Heart left ventricle (tissue), 16 donors: ENCODE measurements at regions of chr17 and their contacts with region 1.

Region 1: GRCh38 chr17:56478836-56479447 is 114.6 kb upstream of the NOG start:
- DNase-seq: no peak
- ATAC-seq: no peak
- H3K4me3 ChIP-seq: no peak overlapping the region
- H3K27ac ChIP-seq: no peak overlapping the region
- H3K4me1 ChIP-seq: no peaks in the 10 kb centered on the region
- H3K27me3 ChIP-seq: peaks cover 0 to 9% (median 0%) of the 10 kb centered on the region in 9 donors
- CTCF ChIP-seq: peak in 9 of 12 donors; percentile 25 to 53 (median 39)
- POLR2A ChIP-seq: no peak

Region 2: DNA sequence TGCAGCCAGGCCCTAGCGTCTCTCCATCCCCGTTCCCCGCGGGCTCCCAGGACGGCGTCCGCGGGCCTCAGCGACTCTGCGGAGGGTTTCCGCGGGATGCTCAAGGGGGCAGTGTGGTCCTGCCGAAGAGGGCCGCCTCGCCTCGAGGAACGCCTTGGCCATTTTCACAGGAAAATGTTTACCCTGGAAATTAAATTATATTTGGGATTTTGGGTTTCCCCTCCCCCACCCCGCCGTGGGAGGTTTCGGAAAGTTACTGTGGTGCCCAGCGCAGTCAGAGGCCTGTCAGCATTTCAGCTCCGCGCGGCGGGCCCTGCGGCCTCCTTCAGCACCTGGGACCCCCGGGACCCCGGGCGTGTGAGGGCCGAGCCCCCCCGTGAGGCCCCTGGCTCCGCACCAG is 633.6 kb before region 1 on chr17:
- intact Hi-C with region 1: loop called in 7 of 10 experiments (anchors 5 to 10 kb)
- DNase-seq: peak; percentile 27 to 69 (median 49)
- ATAC-seq: peak; percentile 71 to 93 (median 80)
- H3K4me3 ChIP-seq: peak overlapping the region in 9 of 12 donors; percentile 15 to 36 (median 32)
- H3K27ac ChIP-seq: no peak overlapping the region
- H3K4me1 ChIP-seq: peaks cover 0 to 6% (median 0%) of the 10 kb centered on the region in 12 donors
- H3K27me3 ChIP-seq: no peaks in the 10 kb centered on the region
- CTCF ChIP-seq: peak; percentile 33 to 73 (median 56)
- POLR2A ChIP-seq: no peak

Region 3: DNA sequence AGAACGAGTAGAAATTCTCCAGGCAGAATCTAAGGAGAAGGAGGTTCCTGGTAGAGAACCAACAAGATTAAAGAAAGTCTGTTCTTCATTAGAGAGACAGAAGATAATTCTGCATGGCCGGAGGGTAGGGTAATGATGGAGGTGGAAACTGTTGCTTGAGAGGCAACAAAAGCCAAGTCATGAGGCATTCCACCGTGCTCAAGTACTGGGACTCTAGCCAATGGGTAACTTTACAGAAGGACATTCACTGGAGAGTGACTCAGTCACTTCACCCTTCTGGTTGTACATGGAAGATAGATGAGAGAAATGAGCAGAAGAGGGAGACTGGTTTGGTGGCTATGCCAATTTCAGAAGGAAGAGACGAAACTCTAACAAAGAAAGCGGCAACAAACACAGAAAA is 379.3 kb before region 1 on chr17:
- intact Hi-C with region 1: loop called in 1 of 10 experiments (anchors 5 kb)
- DNase-seq: no peak
- ATAC-seq: no peak
- H3K4me3 ChIP-seq: no peak overlapping the region
- H3K27ac ChIP-seq: no peak overlapping the region
- H3K4me1 ChIP-seq: no peaks in the 10 kb centered on the region
- H3K27me3 ChIP-seq: peaks cover 0 to 9% (median 0%) of the 10 kb centered on the region in 9 donors
- CTCF ChIP-seq: no peak
- POLR2A ChIP-seq: no peak

Region 4: GRCh38 chr17:56125830-56126819 is 352.8 kb before region 1 on chr17:
- intact Hi-C with region 1: loop called in 5 of 10 experiments (anchors 5 to 10 kb)
- DNase-seq: no peak
- ATAC-seq: no peak
- H3K4me3 ChIP-seq: no peak overlapping the region
- H3K27ac ChIP-seq: no peak overlapping the region
- H3K4me1 ChIP-seq: no peaks in the 10 kb centered on the region
- H3K27me3 ChIP-seq: peaks cover 0 to 10% (median 0%) of the 10 kb centered on the region in 9 donors
- CTCF ChIP-seq: peak; percentile 11 to 50 (median 29)
- POLR2A ChIP-seq: no peak